Activated B cell treated with CpG ODN at 0.5 μM for 24 hours (primary cell): ENCODE measurements at regions of chr6 and their contacts with region 1.

Region 1: DNA sequence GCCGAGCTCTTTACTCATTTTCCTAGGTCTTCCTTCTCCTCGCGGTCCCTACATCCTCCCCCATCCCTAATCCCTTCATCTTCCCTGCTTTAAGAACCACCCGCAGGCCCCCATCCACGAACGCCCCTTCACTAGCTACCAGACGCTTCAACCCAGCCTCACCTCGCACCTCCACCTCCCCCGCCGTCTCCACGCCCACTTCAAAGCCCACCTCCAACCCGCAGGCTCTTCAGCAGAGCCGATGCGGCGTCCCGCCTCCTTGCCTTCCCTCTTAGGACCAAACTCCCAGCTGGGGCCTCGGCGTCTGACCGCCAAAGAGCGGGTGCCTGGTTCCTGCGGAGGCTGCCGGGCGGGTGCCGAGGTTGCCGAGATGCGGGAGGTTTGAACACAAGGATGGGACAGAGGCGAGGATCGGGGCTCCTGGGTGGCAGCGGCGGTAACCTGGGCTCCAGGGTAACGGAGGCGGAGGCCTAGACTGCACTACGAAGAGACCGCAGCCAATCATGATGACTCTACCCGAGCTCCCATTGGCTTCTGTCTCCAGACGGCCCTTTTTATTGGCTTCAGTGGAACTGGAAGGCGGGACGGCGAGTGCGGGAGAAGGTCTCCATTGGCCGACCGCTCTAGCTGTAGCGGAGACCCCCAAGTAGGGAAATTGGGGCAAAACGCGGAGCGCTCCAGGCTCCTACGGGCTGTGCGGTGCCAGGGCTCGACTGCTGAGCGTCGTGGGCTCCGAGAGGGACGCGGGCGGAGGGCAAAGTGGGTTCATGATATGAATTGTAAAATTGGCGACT is at the start of gene LCA5:
- DNase-seq: peak; percentile 73
- ATAC-seq: peak; percentile 98
- H3K4me3 Mint-ChIP-seq: no peak within 1 kb of the TSS
- H3K27ac Mint-ChIP-seq: no peak within 1 kb of the TSS
- H3K4me1 Mint-ChIP-seq: no peaks in the 10 kb centered on the region
- H3K27me3 Mint-ChIP-seq: no peaks in the 10 kb centered on the region
- CTCF ChIP-seq: no peak
- total RNA-seq, gene LCA5: 0.17 and 0.18 TPM in 2 replicates

Region 2: GRCh38 chr6:79078075-79079025 is 458.8 kb before region 1 on chr6 and contains the start of gene PHIP:
- CTCF ChIA-PET with region 1: no interaction called
- POLR2A ChIA-PET with region 1: interaction called, 9 read pairs
- intact Hi-C with region 1: loop called (anchors 1 kb)
- DNase-seq: peak; percentile 93
- ATAC-seq: peak; percentile 73
- H3K4me3 Mint-ChIP-seq: peak within 1 kb of the TSS; percentile 87
- H3K27ac Mint-ChIP-seq: peak within 1 kb of the TSS; percentile 96
- H3K4me1 Mint-ChIP-seq: peaks cover 43% of the 10 kb centered on the region
- H3K27me3 Mint-ChIP-seq: peaks cover 3% of the 10 kb centered on the region
- CTCF ChIP-seq: no peak
- total RNA-seq, gene PHIP: 27.7 and 32.3 TPM in 2 replicates

Region 3: GRCh38 chr6:79525272-79526100 is 11.7 kb before region 1 on chr6:
- CTCF ChIA-PET with region 1: no interaction called
- POLR2A ChIA-PET with region 1: no interaction called
- intact Hi-C with region 1: loop called (anchors 1 kb)
- DNase-seq: no peak
- ATAC-seq: no peak
- H3K4me3 Mint-ChIP-seq: no peak overlapping the region
- H3K27ac Mint-ChIP-seq: no peak overlapping the region
- H3K4me1 Mint-ChIP-seq: no peaks in the 10 kb centered on the region
- H3K27me3 Mint-ChIP-seq: no peaks in the 10 kb centered on the region
- CTCF ChIP-seq: no peak

Region 4: GRCh38 chr6:79687759-79688158 is 150.6 kb after region 1 on chr6:
- CTCF ChIA-PET with region 1: no interaction called
- POLR2A ChIA-PET with region 1: no interaction called
- intact Hi-C with region 1: no loop called
- DNase-seq: no peak
- ATAC-seq: no peak
- H3K4me3 Mint-ChIP-seq: no peak overlapping the region
- H3K27ac Mint-ChIP-seq: no peak overlapping the region
- H3K4me1 Mint-ChIP-seq: no peaks in the 10 kb centered on the region
- H3K27me3 Mint-ChIP-seq: peaks cover 2% of the 10 kb centered on the region
- CTCF ChIP-seq: no peak